Activated CD4-positive, alpha-beta memory T cell treated with anti-CD3 and anti-CD28 coated beads for 36 hours (primary cell): ENCODE measurements at regions of chr4 and their contacts with region 1.

Region 1: GRCh38 chr4:102760645-102761295 is at the start of gene MANBA:
- DNase-seq: peak; percentile 91
- H3K4me3 Mint-ChIP-seq: peak within 1 kb of the TSS; percentile 97
- H3K27ac Mint-ChIP-seq: peak within 1 kb of the TSS; percentile 82
- H3K4me1 Mint-ChIP-seq: peaks cover 36% of the 10 kb centered on the region
- H3K27me3 Mint-ChIP-seq: no peaks in the 10 kb centered on the region
- total RNA-seq, gene MANBA: 10.2 to 10.7 TPM

Region 2: DNA sequence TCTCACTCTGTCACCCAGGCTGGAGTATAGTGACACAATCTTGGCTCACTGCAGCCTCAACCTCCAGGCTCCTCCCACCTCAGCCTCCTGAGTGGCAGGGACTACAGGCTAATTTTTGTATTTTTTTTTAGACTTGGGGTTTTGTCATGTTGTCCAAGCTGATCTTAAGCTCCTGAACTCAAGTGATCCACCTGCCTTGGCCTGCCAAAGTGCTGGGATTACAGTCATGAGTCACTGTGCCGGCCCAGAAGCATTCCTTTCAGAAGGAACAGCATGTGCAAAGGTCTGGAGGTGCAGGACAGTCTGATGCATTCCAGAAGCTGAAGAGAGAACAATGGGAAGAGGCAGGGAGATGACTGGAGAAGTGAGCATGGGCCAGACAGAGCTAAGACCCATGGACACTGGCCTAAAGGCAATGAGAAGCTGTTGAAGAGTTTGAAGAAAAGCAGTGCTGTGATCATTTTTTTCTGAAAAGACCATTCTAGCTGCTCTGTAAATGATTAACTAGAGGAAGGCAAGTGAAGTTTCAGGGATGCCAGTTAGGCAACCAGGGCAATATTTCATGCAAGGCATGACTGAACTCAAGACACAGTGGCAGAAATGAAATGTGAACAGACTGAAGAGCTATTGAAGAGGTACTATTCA is 43.2 kb before region 1 on chr4:
- CTCF ChIA-PET with region 1: no interaction called
- POLR2A ChIA-PET with region 1: no interaction called
- intact Hi-C with region 1: loop called (anchors 5 kb)
- DNase-seq: no peak
- H3K4me3 Mint-ChIP-seq: no peak overlapping the region
- H3K27ac Mint-ChIP-seq: no peak overlapping the region
- H3K4me1 Mint-ChIP-seq: peaks cover 5% of the 10 kb centered on the region
- H3K27me3 Mint-ChIP-seq: no peaks in the 10 kb centered on the region

Region 3: GRCh38 chr4:102780476-102781144 is 19.8 kb after region 1 on chr4:
- CTCF ChIA-PET with region 1: no interaction called
- POLR2A ChIA-PET with region 1: interaction called, 5 read pairs
- intact Hi-C with region 1: loop called (anchors 1 kb)
- DNase-seq: no peak
- H3K4me3 Mint-ChIP-seq: no peak overlapping the region
- H3K27ac Mint-ChIP-seq: no peak overlapping the region
- H3K4me1 Mint-ChIP-seq: peaks cover 4% of the 10 kb centered on the region
- H3K27me3 Mint-ChIP-seq: no peaks in the 10 kb centered on the region

Region 4: DNA sequence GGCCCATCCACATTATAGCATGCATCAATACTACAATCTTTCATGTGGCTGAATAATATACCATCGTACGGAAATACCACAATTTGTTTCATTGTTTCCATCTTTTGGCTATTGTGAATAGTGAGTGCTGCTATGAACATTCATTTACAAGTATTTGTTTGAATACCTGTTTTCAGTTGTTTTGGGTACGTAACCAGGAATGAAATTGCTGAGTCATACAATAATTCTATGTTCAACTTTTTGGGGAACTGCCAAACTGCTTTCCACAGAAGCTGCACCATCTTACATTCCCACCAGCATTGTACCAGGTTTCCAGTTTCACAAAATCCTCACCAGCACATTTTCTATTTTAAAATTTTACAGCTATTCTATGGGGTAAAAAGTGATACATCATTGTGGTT is 28.5 kb after region 1 on chr4:
- CTCF ChIA-PET with region 1: no interaction called
- POLR2A ChIA-PET with region 1: interaction called, 6 read pairs
- intact Hi-C with region 1: loop called (anchors 1 kb)
- DNase-seq: peak; percentile 14
- H3K4me3 Mint-ChIP-seq: no peak overlapping the region
- H3K27ac Mint-ChIP-seq: peak overlapping the region; percentile 67
- H3K4me1 Mint-ChIP-seq: peaks cover 46% of the 10 kb centered on the region
- H3K27me3 Mint-ChIP-seq: no peaks in the 10 kb centered on the region

Region 5: DNA sequence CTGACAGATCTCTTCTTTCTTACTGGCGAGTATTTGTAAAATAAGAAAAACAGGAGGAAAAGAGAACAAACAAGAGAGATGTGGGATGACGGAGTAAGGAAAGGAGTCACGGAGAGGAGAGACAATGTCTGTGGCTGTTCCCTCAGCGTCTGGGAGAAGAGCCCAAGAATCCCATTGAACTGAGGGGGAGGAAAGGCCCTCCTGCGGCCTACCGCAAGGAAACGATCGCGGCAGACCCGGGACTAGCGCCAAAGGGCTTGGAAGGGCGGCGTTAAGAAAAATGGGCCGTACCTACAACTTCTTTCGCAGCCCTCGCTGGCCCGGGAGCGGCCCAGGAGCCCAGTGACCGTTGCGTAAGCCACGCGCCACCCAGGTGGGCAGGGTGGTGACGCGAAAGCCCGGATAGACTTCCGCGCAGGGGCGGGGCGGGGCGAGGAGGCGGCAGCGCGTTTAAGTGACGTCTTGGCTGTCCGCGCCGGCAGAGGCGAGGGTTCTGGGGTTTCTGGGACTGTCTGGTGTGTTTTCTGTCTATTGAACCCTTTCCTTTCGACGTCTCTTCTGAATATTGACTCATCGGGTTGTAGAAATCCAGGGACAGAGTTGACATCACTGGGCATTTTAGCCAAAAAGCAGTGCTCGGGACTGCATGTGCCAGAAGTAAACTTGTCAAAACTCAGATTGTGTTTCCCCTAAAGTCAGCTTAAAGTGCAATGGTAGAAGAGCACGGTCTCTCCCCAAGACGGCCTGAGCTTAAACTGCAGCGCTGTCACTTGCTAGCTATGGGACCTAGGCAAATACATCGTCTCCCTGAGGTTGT is 258.7 kb after region 1 on chr4 and contains the start of gene SLC9B1:
- CTCF ChIA-PET with region 1: no interaction called
- POLR2A ChIA-PET with region 1: no interaction called
- intact Hi-C with region 1: loop called (anchors 2 kb)
- DNase-seq: peak; percentile 97
- H3K4me3 Mint-ChIP-seq: peak within 1 kb of the TSS; percentile 84
- H3K27ac Mint-ChIP-seq: peak within 1 kb of the TSS; percentile 92
- H3K4me1 Mint-ChIP-seq: peaks cover 15% of the 10 kb centered on the region
- H3K27me3 Mint-ChIP-seq: no peaks in the 10 kb centered on the region
- total RNA-seq, gene SLC9B1: 1.9 to 2.4 TPM